HCT116 (cell line): ENCODE measurements at regions of chr11 and their contacts with region 1.

Region 1: DNA sequence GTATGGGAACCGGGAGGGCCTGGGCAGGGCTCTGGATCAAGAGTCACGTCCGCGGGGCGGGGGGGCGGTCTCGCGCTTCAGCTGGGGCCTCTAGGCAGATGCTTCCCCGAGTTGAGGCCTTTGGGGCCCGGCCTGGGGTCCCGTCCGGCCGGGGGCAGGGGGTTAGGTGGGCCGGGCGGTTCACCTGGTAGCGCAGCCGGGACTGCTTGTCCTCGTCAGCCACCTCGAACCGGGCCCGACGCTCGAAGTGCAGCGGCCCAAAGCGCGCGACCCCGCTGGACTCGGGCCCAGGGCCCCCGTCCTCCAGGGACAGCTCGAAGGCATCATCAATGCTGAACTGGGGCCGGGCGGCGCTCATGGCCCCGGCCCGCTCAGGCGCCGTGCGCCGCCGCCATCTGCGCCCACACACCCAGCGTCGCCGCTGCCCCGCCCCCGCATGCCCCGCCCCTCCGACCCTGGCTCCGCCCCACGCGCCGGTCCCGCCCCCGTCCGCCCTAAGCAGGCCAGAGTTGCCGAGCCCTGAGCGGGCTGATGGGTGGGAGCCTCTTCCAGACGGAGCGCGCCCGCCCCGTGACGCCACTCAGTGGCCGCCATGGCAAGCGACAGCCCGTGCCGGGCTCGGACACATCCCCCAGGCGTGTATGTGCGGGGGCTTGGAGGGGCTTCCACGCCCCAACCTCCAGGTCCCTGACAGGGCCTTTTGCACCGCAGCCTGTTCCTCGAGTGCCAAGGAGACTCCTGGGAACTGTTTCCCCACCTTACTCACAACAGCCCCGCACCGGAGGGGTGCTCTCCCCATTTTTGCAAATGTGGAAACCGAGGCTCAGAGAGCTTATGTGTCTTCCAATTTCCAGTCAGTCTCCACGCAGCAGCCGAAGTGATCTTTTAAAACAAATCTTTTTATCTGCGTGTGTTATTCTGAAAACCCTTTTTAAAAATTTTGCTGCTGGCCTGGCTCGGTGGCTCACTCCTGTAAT is at the start of gene TMEM134:
- DNase-seq: peak; percentile 82
- ATAC-seq: peak; percentile 71
- H3K4me3 ChIP-seq: peak within 1 kb of the TSS; percentile 82 to 95
- H3K27ac ChIP-seq: peak within 1 kb of the TSS; percentile 88
- H3K4me1 ChIP-seq: peaks cover 24 to 43% of the 10 kb centered on the region in 2 experiments
- H3K27me3 ChIP-seq: no peaks in the 10 kb centered on the region
- CTCF ChIP-seq: peak in 2 of 3 experiments; percentile 26 to 28; a peak in 2 of 6 replicates
- POLR2A ChIP-seq: peak; percentile 88
- RAD21 ChIP-seq: no peak
- total RNA-seq, gene TMEM134: 44.2 TPM

Region 2: DNA sequence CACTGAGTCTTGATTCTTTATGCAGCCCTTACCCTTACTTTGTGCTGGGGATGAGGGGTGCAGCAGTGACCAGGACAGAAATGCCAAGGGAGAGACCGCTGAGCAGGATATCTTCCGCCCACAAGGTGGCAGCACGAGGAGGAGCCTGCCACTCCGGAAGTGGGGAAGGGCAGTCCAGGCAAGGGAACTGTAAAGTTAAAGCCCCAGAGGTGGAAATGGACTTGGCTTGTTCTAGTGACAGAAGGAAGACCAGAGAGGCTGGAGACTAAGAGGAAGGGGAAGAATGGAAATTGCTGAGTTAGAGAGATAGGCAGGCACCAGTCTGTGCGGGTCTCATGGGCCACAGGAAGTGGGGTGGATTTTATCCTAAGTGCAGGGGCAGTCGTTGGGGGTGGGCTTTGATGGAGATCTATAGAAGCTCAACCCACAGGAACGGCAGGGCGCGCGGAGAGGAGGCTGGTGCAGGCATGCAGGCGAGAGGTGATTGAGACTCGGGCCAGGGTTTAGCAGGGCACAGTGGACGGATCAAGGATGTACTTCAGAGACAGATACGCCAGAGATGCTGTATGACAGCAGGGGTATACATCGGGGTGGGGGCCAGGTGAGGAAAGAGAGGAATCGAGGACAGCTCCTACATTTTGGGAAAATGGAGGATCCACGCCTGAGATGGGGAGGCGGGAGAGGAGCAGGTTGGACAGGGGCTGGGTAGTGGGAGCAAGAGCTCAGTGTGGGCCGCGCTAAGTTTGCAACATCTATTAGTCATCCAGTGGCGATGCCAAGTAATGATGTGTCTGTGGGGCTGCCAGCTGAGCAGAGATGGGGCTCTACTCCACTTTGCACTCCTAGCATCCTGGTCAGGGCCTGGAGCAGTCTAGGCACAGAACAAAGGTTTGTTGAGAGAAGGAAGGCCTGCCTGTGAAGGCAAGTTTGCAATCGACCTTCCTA is 206.1 kb before region 1 on chr11:
- CTCF ChIA-PET with region 1: no interaction called
- POLR2A ChIA-PET with region 1: no interaction called
- RAD21 ChIA-PET with region 1: no interaction called
- intact Hi-C with region 1: no loop called
- DNase-seq: peak; percentile 39
- ATAC-seq: peak; percentile 76
- H3K4me3 ChIP-seq: no peak overlapping the region
- H3K27ac ChIP-seq: peak overlapping the region; percentile 45
- H3K4me1 ChIP-seq: peaks cover 14 to 45% of the 10 kb centered on the region in 2 experiments; a peak in 3 of 4 replicates
- H3K27me3 ChIP-seq: no peaks in the 10 kb centered on the region
- CTCF ChIP-seq: peak; percentile 83 to 94 (median 90)
- POLR2A ChIP-seq: no peak
- RAD21 ChIP-seq: peak; percentile 74

Region 3: DNA sequence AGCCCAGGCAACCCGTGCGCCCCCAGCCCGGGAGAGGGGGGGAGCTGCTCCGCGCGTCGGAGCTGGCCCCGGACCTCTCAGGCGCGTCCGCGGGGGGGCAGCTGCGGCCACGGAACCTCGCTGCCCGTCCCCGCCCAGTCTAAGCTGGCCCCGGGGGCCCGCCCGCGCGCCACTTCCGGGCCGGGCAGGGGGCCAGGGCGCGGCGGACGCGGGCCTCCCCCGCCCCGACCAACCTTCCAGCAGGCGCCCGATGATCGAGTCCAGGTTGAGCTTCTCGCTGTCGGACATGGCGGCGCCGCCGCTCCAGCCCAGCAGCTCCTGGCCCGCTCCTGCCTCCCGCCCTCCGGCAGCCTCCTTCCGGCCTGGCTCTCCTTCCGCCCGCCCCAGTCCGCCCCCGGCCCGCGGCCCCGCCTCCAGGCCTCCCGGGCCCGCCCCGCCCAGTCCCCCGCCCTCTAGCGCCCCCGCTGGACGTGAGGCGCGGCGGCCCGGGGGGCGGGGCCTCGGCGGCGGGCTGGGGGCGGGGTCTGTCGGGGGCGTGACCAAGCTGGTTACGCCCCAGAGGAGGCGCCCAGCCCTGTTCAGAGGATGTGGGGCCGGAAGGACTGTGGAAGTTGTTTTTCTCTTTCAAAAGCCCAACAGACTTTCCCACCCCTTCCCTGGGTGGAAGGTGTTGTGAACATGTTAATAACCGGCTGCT is 67.5 kb before region 1 on chr11 and contains the start of gene PPP1CA:
- CTCF ChIA-PET with region 1: interaction called, 8 read pairs
- POLR2A ChIA-PET with region 1: no interaction called
- RAD21 ChIA-PET with region 1: interaction called in 1 of 2 experiments, 6 read pairs
- intact Hi-C with region 1: loop called (anchors 2 kb)
- DNase-seq: peak; percentile 53
- ATAC-seq: peak; percentile 90
- H3K4me3 ChIP-seq: peak within 1 kb of the TSS; percentile 82 to 90
- H3K27ac ChIP-seq: peak within 1 kb of the TSS; percentile 99
- H3K4me1 ChIP-seq: peaks cover 9 to 18% of the 10 kb centered on the region in 2 experiments
- H3K27me3 ChIP-seq: no peaks in the 10 kb centered on the region
- CTCF ChIP-seq: peak in 1 of 3 experiments; percentile 33; a peak in 3 of 6 replicates
- POLR2A ChIP-seq: peak; percentile 24
- RAD21 ChIP-seq: peak; percentile 48
- total RNA-seq, gene PPP1CA: 238 TPM

Region 4: DNA sequence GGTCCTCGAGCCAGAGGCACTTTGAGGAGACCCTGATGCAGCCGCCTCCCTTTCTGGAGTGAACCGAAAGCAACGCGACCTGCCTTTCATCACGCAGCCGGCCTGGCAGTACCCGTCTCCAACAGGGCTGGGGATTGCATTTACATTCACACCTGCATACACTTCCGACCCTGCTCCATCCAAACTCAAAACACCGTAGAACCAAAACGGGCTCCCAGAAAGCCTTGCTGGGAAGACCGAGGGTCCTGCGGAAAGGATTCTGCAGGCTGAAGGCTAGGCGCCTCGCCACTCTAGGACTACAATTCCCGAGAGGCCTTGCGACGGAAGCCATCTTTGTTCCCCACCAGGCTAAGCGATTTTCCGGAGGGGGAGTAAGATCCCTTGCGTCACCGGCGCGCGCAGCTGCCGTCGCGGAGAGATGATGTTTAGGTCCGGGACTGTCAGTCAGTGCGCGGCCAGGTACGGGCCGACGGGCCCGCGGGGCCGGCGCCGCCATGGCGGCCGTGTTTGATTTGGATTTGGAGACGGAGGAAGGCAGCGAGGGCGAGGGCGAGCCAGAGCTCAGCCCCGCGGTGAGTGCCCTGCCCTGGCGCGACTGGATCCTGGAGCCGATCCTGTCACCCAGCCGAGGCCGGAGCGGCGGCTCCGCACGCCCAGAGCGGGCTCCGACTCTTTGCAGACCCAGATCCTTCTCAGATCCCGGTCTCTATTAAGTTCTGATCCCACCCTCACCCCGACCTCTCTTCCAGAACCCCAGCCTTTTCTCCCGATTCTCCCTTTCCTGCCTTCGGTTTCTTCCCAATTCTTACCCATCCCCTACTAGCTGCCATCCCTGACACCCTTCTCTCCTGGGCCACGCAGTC is 40.8 kb before region 1 on chr11 and contains the start of gene RPS6KB2:
- CTCF ChIA-PET with region 1: no interaction called
- POLR2A ChIA-PET with region 1: no interaction called
- RAD21 ChIA-PET with region 1: no interaction called
- intact Hi-C with region 1: loop called (anchors 1 kb)
- DNase-seq: peak; percentile 94
- ATAC-seq: peak; percentile 91
- H3K4me3 ChIP-seq: peak within 1 kb of the TSS; percentile 91 to 98
- H3K27ac ChIP-seq: peak within 1 kb of the TSS; percentile 71
- H3K4me1 ChIP-seq: peaks cover 11 to 12% of the 10 kb centered on the region in 2 experiments
- H3K27me3 ChIP-seq: no peaks in the 10 kb centered on the region
- CTCF ChIP-seq: no peak
- POLR2A ChIP-seq: peak; percentile 52
- RAD21 ChIP-seq: no peak
- total RNA-seq, gene RPS6KB2: 54.1 TPM

Region 5: GRCh38 chr11:67698247-67698646 is 229.1 kb after region 1 on chr11:
- CTCF ChIA-PET with region 1: no interaction called
- POLR2A ChIA-PET with region 1: no interaction called
- RAD21 ChIA-PET with region 1: no interaction called
- intact Hi-C with region 1: no loop called
- DNase-seq: peak; percentile 22
- ATAC-seq: peak; percentile 99
- H3K4me3 ChIP-seq: no peak overlapping the region
- H3K27ac ChIP-seq: no peak overlapping the region
- H3K4me1 ChIP-seq: peaks cover 0 to 8% of the 10 kb centered on the region in 2 experiments; a peak in 3 of 4 replicates
- H3K27me3 ChIP-seq: no peaks in the 10 kb centered on the region
- CTCF ChIP-seq: peak; percentile 40 to 47 (median 46); a peak in 4 of 6 replicates
- POLR2A ChIP-seq: no peak
- RAD21 ChIP-seq: peak; percentile 31; the same call in 1 of the 2 replicates